SK-N-SH (cell line): ENCODE measurements at regions of chr3 and their contacts with region 1.

Region 1: GRCh38 chr3:55180936-55181535 is 253.2 kb upstream of the LRTM1 start:
- DNase-seq: peak; percentile 38
- H3K4me3 ChIP-seq: no peak overlapping the region; a peak in 1 of 4 replicates
- H3K27ac ChIP-seq: no peak overlapping the region
- H3K4me1 ChIP-seq: peaks cover 4 to 12% of the 10 kb centered on the region in 2 experiments; a peak in 2 of 4 replicates
- H3K27me3 ChIP-seq: no peaks in the 10 kb centered on the region
- CTCF ChIP-seq: peak; percentile 92
- EP300 ChIP-seq: no peak
- RAD21 ChIP-seq: peak; percentile 64

Region 2: GRCh38 chr3:55160241-55160983 is 20.6 kb before region 1 on chr3:
- CTCF ChIA-PET with region 1: interaction called, 12 read pairs
- POLR2A ChIA-PET with region 1: no interaction called
- DNase-seq: no peak
- H3K4me3 ChIP-seq: peak overlapping the region; percentile 23 to 27; a peak in 2 of 4 replicates
- H3K27ac ChIP-seq: peak overlapping the region; percentile 95 to 100
- H3K4me1 ChIP-seq: peaks cover 8 to 22% of the 10 kb centered on the region in 2 experiments
- H3K27me3 ChIP-seq: no peaks in the 10 kb centered on the region
- CTCF ChIP-seq: no peak
- EP300 ChIP-seq: peak; percentile 71 to 99
- RAD21 ChIP-seq: no peak

Region 3: DNA sequence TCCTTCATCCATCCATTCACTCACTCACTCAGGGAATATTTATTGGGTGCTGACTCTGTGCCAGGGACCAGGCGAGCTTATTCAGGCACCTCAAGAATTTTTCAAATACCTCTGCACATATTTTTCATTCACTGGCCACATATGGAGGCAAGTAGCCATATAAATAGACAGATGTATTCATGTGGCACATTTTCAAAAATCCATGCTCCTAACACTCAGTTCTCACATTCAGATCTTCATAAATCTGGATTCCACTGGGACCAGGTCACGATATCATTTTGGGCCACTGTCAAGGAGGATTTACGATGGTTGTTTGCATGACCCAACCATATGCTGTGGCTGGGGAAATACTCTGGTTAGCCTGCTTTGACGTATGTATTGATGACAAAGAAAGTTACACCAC is 11.4 kb before region 1 on chr3:
- CTCF ChIA-PET with region 1: interaction called, 57 read pairs
- POLR2A ChIA-PET with region 1: no interaction called
- DNase-seq: no peak
- H3K4me3 ChIP-seq: no peak overlapping the region
- H3K27ac ChIP-seq: peak overlapping the region; percentile 69 to 88; a peak in 3 of 4 replicates
- H3K4me1 ChIP-seq: peaks cover 0 to 16% of the 10 kb centered on the region in 2 experiments; a peak in 2 of 4 replicates
- H3K27me3 ChIP-seq: no peaks in the 10 kb centered on the region
- CTCF ChIP-seq: no peak
- EP300 ChIP-seq: peak; percentile 17 to 91; a peak in 1 of 4 replicates
- RAD21 ChIP-seq: no peak

Region 4: GRCh38 chr3:55191911-55192787 is 11.1 kb after region 1 on chr3:
- CTCF ChIA-PET with region 1: interaction called, 11 read pairs
- POLR2A ChIA-PET with region 1: no interaction called
- DNase-seq: no peak
- H3K4me3 ChIP-seq: no peak overlapping the region
- H3K27ac ChIP-seq: peak overlapping the region; percentile 62 to 100
- H3K4me1 ChIP-seq: peaks cover 0 to 13% of the 10 kb centered on the region in 2 experiments; a peak in 2 of 4 replicates
- H3K27me3 ChIP-seq: no peaks in the 10 kb centered on the region
- CTCF ChIP-seq: no peak
- EP300 ChIP-seq: peak in 1 of 2 experiments; percentile 84; a peak in 2 of 4 replicates
- RAD21 ChIP-seq: no peak